AG04449 (cell line): ENCODE measurements at regions of chr2 and their contacts with region 1.

Region 1: DNA sequence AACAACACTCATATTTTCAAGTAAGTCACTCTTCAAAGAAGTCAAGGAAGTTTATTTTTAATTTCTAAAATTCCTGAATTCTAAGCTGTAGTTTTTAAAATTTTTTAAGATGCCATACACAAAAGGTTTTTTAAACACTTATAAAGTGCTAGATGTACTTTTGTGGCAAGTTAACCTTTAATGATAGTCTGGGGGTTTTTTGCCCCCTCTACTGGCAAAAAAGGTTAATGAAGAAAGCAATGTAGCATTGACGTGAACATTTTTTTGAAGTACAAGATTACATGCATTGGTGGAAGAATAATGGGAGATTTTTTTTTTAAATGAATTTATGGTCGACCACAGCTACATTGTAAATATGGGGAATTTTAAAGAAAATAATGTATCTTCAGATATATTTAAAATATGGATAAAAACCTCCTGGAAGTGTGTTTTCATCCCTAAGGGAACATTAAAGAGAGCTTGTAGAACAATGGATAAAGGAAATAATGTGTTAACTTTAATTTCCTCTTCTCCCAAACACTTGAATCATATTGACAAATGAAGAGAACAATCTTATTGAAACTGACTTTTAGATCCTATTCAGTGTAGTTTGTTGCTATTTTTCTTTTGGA is 12.6 kb downstream of the ITPRID2 start:
- DNase-seq: no peak
- H3K4me3 ChIP-seq: no peak overlapping the region
- CTCF ChIP-seq: no peak

Region 2: DNA sequence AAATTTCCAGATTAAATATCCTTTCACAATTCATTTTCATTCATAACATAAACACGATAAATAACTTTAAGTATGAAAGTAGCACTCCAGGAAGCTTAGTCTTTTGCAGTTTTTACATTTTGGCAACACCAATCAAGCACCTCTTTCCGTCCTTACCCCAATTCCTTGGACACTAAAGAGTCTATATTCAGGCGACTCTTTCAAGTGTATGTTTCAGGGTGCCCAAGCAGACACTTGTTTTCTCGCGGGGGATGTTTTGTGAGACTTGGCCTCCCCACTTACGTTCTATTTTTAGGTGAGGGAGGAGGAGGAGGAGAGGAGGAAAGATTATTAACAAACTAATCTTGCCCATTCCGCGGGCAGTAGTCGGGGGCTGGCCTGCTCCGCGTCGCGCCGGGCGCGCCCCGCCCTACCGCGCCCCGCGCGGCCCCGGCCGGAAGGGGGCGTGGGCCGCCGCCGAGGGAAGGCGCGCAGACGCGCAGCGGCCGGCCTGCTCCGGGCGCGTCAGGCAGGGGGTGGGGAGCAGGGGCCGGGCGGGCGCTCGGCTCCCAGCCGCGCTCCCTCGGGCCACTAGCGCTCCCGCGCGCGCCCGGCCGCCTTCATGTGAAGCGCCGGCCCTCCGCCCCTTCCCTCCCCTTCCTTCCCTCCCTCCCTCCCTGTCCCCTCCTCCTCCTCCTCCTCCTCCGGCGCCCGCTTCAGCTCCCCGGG is 12.7 kb before region 1 on chr2 and contains the start of gene ITPRID2:
- CTCF ChIA-PET with region 1: interaction called, 59 read pairs
- POLR2A ChIA-PET with region 1: no interaction called
- DNase-seq: no peak
- H3K4me3 ChIP-seq: peak within 1 kb of the TSS; percentile 92
- CTCF ChIP-seq: no peak

Region 3: DNA sequence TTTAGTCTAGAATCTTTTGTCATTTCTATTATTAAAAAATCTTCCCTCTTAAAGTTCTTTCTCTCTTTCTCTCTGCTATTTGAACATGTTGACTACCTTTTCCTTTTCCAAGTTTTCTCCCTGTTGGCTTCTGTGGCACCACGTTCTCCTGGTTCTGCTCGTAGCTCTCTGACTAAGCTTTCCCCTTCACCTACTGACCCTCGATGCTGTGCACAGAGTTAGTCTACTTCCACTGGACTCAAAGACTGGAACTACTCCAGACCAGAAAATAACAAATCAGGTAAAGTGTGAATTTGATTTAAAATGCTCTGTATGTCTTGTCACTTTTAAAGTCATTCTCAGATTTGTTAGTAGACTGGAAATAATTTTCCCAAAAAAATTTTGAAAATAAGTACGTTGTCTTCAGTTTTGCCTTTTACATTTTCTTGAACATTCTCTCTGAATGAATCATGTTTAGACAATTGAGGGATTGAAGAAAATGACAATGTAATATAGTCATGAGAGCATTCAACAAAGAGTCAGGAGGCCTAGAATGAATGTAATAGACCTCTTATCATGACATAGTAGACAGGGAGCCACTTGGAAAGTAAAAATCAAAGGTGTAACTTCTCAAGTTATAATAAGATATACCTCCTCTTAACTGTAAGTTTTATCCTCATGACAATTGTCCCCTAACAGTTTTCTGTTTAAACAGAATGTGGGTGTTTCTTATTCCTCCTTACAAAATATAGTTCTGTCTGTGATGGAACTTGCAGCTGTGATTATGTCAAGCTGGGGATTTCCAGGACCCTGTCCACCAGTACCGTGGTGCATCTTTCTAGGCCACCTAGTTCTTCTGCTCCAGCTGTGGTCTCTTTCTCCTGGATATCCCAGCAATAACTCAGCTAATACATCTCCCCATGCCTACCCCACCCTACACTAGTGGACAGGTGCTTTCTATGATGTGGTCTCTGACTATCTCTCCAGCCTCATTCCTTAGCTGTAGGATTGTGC is 12.9 kb after region 1 on chr2:
- CTCF ChIA-PET with region 1: interaction called, 18 read pairs
- POLR2A ChIA-PET with region 1: interaction called, 3 read pairs
- DNase-seq: no peak
- H3K4me3 ChIP-seq: no peak overlapping the region
- CTCF ChIP-seq: no peak

Region 4: DNA sequence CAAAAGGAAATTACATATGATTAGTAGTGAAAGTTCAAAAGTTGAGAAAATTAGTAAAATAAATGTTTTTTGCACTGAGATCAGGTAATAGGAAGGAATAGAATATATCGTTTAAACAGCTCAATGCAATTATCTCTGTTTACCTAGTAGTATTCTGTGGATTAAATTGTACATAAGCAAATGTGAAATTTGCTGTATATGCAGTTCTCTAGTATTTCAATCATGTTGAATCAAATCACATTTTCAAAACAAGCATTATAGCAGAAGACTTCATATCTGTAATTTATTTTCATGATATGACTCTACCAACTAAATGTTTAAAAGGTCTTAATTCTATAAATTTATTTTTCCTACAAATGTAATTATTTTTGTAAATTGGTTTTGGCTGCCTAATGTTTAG is 19.0 kb after region 1 on chr2:
- CTCF ChIA-PET with region 1: interaction called, 17 read pairs
- POLR2A ChIA-PET with region 1: interaction called, 3 read pairs
- DNase-seq: no peak
- H3K4me3 ChIP-seq: no peak overlapping the region
- CTCF ChIP-seq: no peak

Region 5: DNA sequence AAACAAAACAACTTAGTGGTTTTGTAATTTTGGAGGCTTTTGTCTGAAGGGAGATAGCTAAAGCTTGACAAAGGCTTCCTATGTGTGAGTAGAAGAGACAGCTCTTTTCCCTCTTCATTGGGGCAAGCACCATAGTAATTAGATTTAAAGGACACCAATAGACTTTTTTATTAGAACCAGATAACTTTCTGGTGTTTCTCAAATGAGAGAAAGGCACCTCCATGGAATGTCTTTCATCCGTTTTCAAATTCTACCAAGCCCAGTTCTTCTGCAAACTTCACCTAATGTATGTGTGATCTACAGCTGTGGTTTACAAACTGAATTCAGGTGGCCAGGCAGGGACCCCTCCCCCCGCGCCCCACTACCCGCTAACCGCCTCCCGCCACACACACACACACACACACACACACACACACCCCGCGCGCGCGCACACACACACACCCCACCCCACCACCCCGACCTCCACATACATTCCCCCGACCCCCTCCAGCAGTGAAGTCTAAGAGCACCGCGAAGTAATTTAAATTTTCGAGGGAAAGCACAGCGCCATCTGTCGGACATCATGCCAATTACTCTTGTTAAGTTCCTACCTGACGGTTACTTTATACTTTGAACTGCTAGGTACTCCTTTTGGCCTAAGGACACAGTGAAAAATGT is 49.9 kb after region 1 on chr2:
- CTCF ChIA-PET with region 1: interaction called, 12 read pairs
- POLR2A ChIA-PET with region 1: no interaction called
- DNase-seq: no peak
- H3K4me3 ChIP-seq: peak overlapping the region; percentile 29
- CTCF ChIP-seq: peak; percentile 63